ENCODE measurements at regions of chr3 and their contacts with region 1.

Region 1: DNA sequence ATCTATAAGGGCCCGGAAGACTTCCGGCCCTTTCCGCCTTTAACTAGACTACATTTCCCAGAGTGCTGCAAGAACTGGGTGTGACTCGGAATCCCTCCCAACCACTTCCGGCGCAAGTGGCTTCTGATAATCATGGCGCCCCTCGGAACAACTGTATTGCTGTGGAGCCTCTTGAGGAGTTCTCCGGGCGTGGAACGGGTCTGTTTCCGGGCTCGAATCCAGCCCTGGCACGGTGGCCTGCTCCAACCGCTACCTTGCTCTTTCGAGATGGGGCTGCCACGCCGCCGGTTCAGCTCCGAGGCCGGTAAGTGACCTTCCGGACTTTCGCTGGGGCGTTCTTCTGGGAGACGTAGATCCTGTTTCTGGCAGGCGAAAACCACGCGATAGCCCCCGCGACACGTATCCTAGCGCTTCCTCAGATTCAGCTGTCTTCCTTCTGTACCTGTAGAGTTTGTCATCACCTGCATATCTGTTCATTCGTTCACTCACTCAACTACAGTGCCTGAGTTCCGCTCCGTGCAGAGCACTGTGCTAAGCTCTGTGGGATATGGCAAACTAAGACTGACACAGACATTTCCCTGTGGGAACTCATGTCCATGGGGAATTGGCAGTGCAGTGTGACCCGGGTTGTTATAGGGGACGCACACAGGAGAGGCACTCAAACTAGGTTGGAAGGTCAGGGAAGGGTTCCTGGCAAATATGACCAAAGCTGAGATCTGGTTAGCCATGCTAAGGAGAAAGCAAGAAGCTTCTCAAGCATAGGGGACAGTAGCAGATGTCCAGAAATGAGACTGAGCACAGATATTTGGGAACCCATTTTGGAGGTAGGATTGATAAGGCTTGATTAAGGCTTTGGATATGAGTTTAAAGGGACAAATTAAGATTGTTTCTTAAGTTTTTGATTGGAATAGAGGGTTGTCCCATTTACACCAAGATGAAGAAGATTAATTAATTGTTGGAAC is at the start of gene MRPS22:
- DNase-seq: peak; percentile 52 to 87 (median 85)
- ATAC-seq: peak; percentile 97
- H3K4me3 ChIP-seq: peak within 1 kb of the TSS; percentile 86
- H3K4me3 Mint-ChIP-seq: peak within 1 kb of the TSS in 2 of 10 donors; percentile 59 to 72
- H3K27ac ChIP-seq: peak within 1 kb of the TSS; percentile 88
- H3K27ac Mint-ChIP-seq: peak within 1 kb of the TSS in 3 of 9 donors; percentile 15 to 64 (median 31)
- H3K4me1 ChIP-seq: peaks cover 15% of the 10 kb centered on the region in 2 donors
- H3K4me1 Mint-ChIP-seq: peaks cover 7 to 19% (median 10%) of the 10 kb centered on the region in 7 donors
- H3K27me3 ChIP-seq: no peaks in the 10 kb centered on the region
- H3K27me3 Mint-ChIP-seq: peaks cover 0 to 9% (median 6%) of the 10 kb centered on the region in 5 donors
- total RNA-seq, gene MRPS22: 26.2 to 37.2 (median 36.3) TPM

Region 2: DNA sequence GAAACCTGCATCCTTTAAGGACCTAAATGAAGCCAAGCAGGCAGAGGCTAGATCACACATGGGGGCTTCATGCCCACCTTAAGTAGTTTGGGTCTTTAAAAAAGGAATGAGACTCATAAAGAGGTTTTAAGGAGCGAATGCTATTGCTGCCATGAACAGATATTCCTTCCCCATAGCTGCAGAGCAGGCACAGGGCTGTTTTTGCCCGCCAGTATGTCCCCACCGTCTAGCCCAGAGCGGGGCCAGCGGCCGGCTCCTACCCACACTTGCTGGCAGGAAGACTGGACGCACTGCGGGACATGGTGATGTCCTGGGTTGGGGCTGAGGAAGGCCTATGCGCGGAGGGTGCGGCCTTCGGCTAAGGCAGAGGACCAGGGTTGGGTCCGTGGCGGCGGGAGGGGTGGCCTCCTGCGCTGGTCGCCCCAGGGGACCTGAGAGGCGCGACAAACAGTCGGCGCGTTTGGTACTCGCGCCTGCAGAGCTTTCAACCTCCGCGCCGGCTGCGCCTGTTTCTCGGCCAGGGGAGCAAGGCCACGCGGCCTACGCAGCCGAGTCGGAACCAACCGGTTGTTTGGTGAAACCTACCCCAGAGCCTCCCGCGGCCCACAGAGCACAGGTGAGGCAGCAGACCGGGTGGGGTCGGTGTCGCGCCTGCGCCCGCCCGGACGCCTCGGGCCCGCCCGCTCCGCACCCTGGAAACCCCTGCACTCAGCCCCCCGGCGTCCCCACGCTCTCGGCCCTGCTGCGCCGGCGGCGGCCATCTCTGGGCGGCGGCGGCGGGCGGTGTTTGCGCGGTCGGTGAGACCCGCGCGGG is 735.6 kb before region 1 on chr3 and contains the start of gene FAIM:
- CTCF ChIA-PET with region 1: no interaction called
- POLR2A ChIA-PET with region 1: no interaction called
- intact Hi-C with region 1: loop called in 1 of 2 experiments (anchors 5 kb)
- DNase-seq: peak; percentile 54 to 82 (median 77)
- ATAC-seq: peak; percentile 84
- H3K4me3 ChIP-seq: peak within 1 kb of the TSS; percentile 81
- H3K4me3 Mint-ChIP-seq: peak within 1 kb of the TSS; percentile 84 to 96 (median 91)
- H3K27ac ChIP-seq: peak within 1 kb of the TSS; percentile 90
- H3K27ac Mint-ChIP-seq: peak within 1 kb of the TSS; percentile 84 to 100 (median 98)
- H3K4me1 ChIP-seq: peaks cover 14 to 15% of the 10 kb centered on the region in 2 donors
- H3K4me1 Mint-ChIP-seq: peaks cover 6 to 21% (median 18%) of the 10 kb centered on the region in 7 donors
- H3K27me3 ChIP-seq: no peaks in the 10 kb centered on the region
- H3K27me3 Mint-ChIP-seq: peaks cover 0 to 3% (median 0%) of the 10 kb centered on the region in 5 donors
- total RNA-seq, gene FAIM: 1.6 to 3.3 (median 2.6) TPM

Region 3: GRCh38 chr3:139329345-139329850 is 14.8 kb before region 1 on chr3:
- CTCF ChIA-PET with region 1: interaction called, 8 read pairs
- POLR2A ChIA-PET with region 1: no interaction called
- intact Hi-C with region 1: loop called in 1 of 2 experiments (anchors 1 kb)
- DNase-seq: peak; percentile 68 to 95 (median 82)
- ATAC-seq: peak; percentile 98
- H3K4me3 ChIP-seq: no peak overlapping the region
- H3K4me3 Mint-ChIP-seq: peak overlapping the region; percentile 45 to 85 (median 70)
- H3K27ac ChIP-seq: no peak overlapping the region
- H3K27ac Mint-ChIP-seq: peak overlapping the region in 3 of 9 donors; percentile 10 to 40 (median 22)
- H3K4me1 ChIP-seq: peaks cover 0 to 5% of the 10 kb centered on the region in 2 donors
- H3K4me1 Mint-ChIP-seq: peaks cover 8 to 26% (median 19%) of the 10 kb centered on the region in 7 donors
- H3K27me3 ChIP-seq: no peaks in the 10 kb centered on the region
- H3K27me3 Mint-ChIP-seq: peaks cover 24 to 37% (median 29%) of the 10 kb centered on the region in 5 donors

Region 4: GRCh38 chr3:139389458-139390209 is 45.5 kb after region 1 on chr3 and contains the start of gene COPB2:
- CTCF ChIA-PET with region 1: no interaction called
- POLR2A ChIA-PET with region 1: interaction called, 7 read pairs
- intact Hi-C with region 1: loop called (anchors 1 kb)
- DNase-seq: peak; percentile 84 to 97 (median 87)
- ATAC-seq: peak; percentile 97
- H3K4me3 ChIP-seq: peak within 1 kb of the TSS; percentile 91
- H3K4me3 Mint-ChIP-seq: peak within 1 kb of the TSS; percentile 87 to 100 (median 99)
- H3K27ac ChIP-seq: peak within 1 kb of the TSS; percentile 93
- H3K27ac Mint-ChIP-seq: peak within 1 kb of the TSS; percentile 97 to 100 (median 99)
- H3K4me1 ChIP-seq: peaks cover 5 to 13% of the 10 kb centered on the region in 2 donors
- H3K4me1 Mint-ChIP-seq: peaks cover 34 to 70% (median 60%) of the 10 kb centered on the region in 7 donors
- H3K27me3 ChIP-seq: no peaks in the 10 kb centered on the region
- H3K27me3 Mint-ChIP-seq: peaks cover 0 to 13% (median 0%) of the 10 kb centered on the region in 5 donors
- total RNA-seq, gene COPB2: 23.5 to 109 (median 64.5) TPM

Region 5: DNA sequence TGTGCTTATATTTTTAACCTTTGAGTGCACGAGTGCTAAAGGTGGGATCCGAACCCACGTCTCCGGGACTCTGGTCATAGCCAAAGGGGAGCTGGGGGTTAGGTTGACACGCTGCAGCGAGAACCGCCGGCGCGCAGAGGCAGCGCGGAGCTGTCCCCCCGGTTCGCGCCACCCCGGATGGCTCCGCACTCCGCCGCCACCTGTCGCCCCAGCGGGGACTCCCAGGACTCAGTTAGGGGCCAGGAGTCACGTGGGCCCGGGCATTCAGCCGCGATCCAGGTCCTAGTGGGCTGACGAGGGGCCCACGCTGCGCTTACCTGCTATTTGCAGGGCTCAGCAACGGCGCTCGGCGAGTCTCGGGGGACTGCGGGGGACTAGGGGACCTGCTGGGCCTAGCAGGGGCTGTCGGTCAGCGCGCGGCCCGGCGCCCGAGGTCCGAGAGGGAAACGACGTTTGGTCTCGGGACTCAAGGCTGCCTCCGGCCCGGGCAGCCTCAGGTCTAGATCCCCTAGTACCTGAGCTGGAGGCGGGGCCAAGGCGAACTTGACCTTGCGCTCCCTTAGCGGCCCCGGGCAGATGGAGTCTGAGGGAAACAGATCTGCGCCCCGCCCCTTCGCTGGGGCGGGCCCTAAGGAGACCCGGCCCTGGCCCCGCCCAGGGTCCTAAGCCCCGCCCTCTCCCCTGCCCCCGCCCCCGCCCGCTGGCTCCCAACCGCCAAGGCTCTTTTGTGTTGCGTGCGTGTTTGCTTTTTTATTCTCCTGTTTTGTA is 333.4 kb after region 1 on chr3 and contains the start of gene NMNAT3:
- CTCF ChIA-PET with region 1: no interaction called
- POLR2A ChIA-PET with region 1: no interaction called
- intact Hi-C with region 1: loop called in 1 of 2 experiments (anchors 1 kb)
- DNase-seq: peak; percentile 65 to 84 (median 79)
- ATAC-seq: peak; percentile 99
- H3K4me3 ChIP-seq: peak within 1 kb of the TSS; percentile 73
- H3K4me3 Mint-ChIP-seq: peak within 1 kb of the TSS; percentile 76 to 88 (median 86)
- H3K27ac ChIP-seq: peak within 1 kb of the TSS; percentile 78
- H3K27ac Mint-ChIP-seq: peak within 1 kb of the TSS in 6 of 9 donors; percentile 31 to 80 (median 52)
- H3K4me1 ChIP-seq: peaks cover 0 to 7% of the 10 kb centered on the region in 2 donors
- H3K4me1 Mint-ChIP-seq: peaks cover 6 to 23% (median 14%) of the 10 kb centered on the region in 7 donors
- H3K27me3 ChIP-seq: no peaks in the 10 kb centered on the region
- H3K27me3 Mint-ChIP-seq: peaks cover 0 to 14% (median 0%) of the 10 kb centered on the region in 5 donors
- total RNA-seq, gene NMNAT3: 0.56 to 7.4 (median 4.5) TPM